CD14-positive monocyte (primary cell): ENCODE measurements at regions of chr19 and their contacts with region 1.

Region 1: DNA sequence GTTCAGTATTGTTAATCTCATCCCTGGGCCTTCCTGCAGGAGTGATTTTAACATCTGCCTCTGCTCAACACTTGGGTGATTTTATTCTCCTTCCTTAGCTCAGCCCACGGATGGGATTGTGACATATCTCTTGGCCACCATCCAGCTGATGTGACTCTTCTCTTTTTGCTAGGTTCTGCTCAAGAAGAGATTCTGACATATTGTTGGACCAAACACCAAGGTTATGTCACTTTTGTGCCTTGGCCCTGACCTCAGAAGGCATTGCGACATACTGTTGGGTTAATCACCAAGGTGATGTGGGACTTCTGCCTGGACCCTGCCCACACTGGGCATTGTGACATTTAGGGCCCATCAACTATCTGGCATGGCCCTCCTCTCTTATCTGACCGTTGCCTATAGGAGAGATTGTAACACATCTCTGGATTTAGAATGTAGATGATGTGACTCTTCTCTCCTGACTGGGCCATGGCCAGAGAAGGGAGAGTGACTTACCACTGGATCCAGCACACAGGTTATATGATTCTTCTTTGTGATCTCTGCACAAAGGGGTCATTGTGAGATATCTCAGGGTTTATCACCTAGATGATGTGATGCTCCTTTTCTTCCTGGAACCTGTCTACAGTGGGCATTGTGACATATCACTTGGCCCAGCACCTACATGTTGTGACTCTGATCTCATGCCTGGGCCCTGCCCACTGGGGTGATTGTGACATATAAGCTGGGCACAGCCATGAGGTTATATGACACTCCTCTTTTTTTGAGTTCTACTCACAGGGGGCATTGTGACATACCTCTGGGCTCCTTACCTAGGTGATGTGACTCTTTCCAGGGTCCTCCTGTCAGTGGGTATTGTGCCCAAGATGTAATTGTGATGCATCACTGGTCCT is 88.8 kb downstream of the ZNF429 start:
- DNase-seq: peak; percentile 95 to 98 (median 95)
- H3K4me3 ChIP-seq: peak overlapping the region in 1 of 3 experiments; percentile 9
- H3K4me3 Mint-ChIP-seq: peak overlapping the region in 1 of 2 donors; percentile 21
- H3K27ac ChIP-seq: peak overlapping the region; percentile 90 to 99
- H3K27ac Mint-ChIP-seq: peak overlapping the region in 6 of 7 donors; percentile 95 to 99 (median 96)
- H3K4me1 ChIP-seq: peaks cover 36 to 38% of the 10 kb centered on the region in 2 donors
- H3K4me1 Mint-ChIP-seq: peaks cover 43% of the 10 kb centered on the region
- H3K27me3 ChIP-seq: no peaks in the 10 kb centered on the region
- H3K27me3 Mint-ChIP-seq: peaks cover 0 to 2% (median 1%) of the 10 kb centered on the region in 3 donors
- CTCF ChIP-seq: no peak

Region 2: DNA sequence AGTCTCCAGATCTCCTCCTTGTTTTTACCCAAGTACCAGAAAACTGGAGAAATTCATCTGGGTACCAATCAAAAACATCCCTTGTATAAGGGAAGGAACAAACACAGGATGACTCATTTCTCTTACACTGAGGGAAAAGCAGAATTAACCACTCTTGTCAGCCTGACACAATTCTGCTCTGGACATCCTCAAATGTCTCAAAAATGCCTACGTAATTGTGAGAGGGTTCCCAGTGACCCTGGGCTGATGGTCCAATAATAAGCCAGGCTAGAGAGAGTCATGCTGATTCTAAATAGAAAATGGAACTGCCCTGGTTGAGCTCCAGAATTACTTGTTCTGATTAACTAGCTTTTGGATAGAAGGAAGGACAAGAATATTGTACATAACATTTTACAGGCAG is 279.5 kb before region 1 on chr19:
- intact Hi-C with region 1: loop called in 1 of 2 experiments (anchors 5 kb)
- DNase-seq: peak; percentile 75 to 91 (median 79)
- H3K4me3 ChIP-seq: peak overlapping the region in 1 of 3 experiments; percentile 31
- H3K4me3 Mint-ChIP-seq: peak overlapping the region in 1 of 2 donors; percentile 28
- H3K27ac ChIP-seq: peak overlapping the region; percentile 9 to 86
- H3K27ac Mint-ChIP-seq: peak overlapping the region in 6 of 7 donors; percentile 43 to 92 (median 80)
- H3K4me1 ChIP-seq: peaks cover 16 to 27% of the 10 kb centered on the region in 2 donors
- H3K4me1 Mint-ChIP-seq: peaks cover 22% of the 10 kb centered on the region
- H3K27me3 ChIP-seq: no peaks in the 10 kb centered on the region
- H3K27me3 Mint-ChIP-seq: no peaks in the 10 kb centered on the region
- CTCF ChIP-seq: no peak

Region 3: DNA sequence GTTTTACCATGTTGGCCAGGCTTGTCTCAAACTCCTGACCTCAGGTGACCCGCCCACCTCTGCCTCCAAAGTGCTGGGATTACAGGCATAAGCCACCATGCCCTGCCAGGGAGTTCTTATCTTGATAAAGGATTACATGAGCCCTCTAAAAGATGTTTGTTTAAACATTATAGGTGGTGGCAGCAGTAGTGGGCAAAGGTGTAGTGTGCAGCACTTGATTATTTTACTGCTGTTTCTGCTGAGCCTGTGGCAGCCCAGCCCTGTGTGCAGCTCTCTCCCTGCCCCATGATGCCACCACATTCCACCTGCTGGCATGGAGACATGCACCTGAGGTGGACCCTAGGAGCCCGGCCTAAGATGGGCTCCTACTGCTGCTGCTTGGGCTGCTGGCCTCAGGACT is 34.7 kb before region 1 on chr19:
- intact Hi-C with region 1: no loop called
- DNase-seq: no peak
- H3K4me3 ChIP-seq: no peak overlapping the region
- H3K4me3 Mint-ChIP-seq: no peak overlapping the region
- H3K27ac ChIP-seq: no peak overlapping the region
- H3K27ac Mint-ChIP-seq: no peak overlapping the region
- H3K4me1 ChIP-seq: no peaks in the 10 kb centered on the region
- H3K4me1 Mint-ChIP-seq: no peaks in the 10 kb centered on the region
- H3K27me3 ChIP-seq: no peaks in the 10 kb centered on the region
- H3K27me3 Mint-ChIP-seq: peaks cover 0 to 2% (median 2%) of the 10 kb centered on the region in 3 donors
- CTCF ChIP-seq: no peak